RWPE1 (cell line): ENCODE measurements at regions of chr10 and their contacts with region 1.

Region 1: DNA sequence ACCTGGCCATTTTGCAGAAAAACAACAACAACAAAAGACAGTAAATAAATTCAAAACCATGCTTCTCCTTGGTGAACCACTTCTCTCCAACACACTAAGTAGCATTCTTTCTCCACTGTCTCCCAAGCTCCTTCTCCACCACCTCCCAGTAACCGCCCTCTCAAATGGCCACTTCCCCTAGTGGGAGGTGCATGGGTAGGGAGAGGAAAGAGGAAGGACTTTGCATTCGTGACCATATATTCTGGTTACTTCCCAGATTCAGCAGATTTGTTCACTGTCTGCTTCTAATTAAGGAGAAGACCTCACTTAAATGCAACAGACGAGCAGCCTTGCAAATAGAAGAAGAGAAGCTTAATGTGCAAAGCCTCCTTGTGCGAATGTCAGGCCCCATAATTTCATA is 166.8 kb downstream of the SORCS1 start:
- DNase-seq: no peak
- H3K27ac ChIP-seq: no peak overlapping the region
- CTCF ChIP-seq: no peak

Region 2: DNA sequence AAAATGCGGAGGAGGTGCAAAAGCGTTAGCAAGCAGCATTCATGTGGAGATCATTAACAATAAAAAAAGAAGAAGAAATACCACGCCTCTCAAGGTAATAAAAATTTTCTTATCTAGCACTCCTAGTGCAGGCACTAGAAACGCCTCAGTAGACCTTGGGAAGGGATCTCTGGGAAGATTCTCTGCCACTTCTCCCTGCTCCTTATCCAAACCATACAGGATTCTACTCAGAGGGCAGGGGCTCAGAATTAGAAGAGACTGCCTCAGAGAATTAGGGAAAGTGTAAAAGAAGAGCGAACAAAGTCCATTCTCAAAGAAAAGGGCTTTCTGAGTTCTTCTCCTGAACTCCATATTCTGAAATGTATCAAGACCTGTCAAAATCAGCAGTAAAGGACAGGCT is 246.6 kb before region 1 on chr10:
- CTCF ChIA-PET with region 1: no interaction called
- POLR2A ChIA-PET with region 1: no interaction called
- DNase-seq: no peak
- H3K27ac ChIP-seq: no peak overlapping the region
- CTCF ChIP-seq: no peak

Region 3: DNA sequence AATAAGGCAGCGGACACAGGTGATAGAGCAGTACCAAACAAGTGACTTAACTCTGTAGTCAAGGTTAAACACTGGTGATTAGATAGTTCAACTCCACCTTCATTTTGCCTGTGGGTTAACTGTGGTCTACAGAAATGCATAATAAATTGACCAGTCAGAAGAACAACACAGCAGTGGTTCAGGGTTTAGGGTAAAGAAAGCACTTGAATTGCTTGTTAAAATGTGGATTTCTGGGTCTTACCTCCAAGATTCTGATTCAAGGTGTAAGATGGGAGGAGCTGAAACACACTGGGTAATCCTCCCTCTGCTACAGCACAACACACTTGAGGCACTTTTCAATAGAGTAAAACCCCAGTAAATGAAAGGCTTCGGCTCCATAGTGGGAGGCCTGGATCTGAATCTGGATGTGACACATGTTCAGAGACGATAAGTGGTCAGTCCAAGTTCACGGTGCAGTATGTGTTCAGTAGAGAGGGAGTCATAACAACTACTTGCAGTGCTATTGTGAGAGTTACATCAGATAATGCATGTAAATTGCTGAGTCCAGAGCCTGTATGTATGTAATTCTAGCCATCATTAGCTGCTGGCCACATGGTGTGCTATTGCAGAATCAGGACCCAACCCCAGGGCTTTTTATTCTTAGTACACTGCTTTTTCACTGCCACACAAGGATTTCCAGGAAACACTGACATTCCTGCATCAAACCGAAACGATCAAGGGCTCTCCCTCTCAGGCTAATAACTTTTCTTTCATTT is 25.1 kb after region 1 on chr10:
- CTCF ChIA-PET with region 1: no interaction called
- POLR2A ChIA-PET with region 1: interaction called, 12 read pairs
- DNase-seq: no peak
- H3K27ac ChIP-seq: no peak overlapping the region
- CTCF ChIP-seq: no peak